Activated naive CD4-positive, alpha-beta T cell treated with anti-CD3 and anti-CD28 coated beads, Interleukin-2, amount 10 ng/mL, durations not matched to agents 7 days and 5 days (primary cell): ENCODE measurements at regions of chr14 and their contacts with region 1.

Region 1: DNA sequence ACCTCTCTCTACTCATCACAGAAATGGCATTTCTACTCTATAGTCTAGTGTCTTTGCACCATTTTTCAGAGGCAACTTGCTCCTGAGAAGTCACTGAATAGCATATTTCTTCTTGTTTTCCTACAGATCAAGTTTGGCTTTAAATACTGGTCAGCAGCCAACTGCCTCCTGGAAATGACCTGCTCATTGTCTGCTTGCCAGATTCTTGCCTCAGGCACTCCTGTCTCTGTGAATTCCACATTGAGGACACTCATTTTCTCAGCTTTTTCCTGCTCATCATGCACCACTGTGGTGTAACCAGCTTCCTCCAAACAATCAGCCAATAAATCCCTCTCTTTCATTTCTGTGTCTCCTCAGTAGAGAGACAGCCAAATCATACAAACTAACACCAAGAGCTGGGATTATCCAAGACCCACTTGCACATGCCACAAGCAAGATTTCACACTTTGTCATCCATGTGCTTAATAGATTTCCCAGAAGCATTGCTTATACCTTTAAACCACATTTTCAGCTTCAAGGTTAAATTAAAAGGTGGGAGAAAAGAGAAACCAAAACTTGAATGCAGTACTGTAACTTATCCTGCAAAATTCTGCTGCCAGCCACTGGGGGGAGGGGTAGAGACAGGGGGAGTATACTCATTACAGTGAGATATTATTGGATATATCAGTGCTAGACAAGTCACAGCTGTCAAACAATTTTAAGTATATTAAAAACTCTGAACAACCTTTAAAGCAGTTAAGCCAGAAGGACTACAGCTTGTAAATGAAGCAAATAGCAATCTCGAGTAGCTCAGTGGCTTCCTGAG is 105.0 kb downstream of the PPP2R5E start:
- DNase-seq: peak; percentile 67
- H3K4me3 Mint-ChIP-seq: peak overlapping the region; percentile 55
- H3K27ac Mint-ChIP-seq: peak overlapping the region; percentile 74
- H3K4me1 Mint-ChIP-seq: peaks cover 43% of the 10 kb centered on the region
- H3K27me3 Mint-ChIP-seq: no peaks in the 10 kb centered on the region

Region 2: DNA sequence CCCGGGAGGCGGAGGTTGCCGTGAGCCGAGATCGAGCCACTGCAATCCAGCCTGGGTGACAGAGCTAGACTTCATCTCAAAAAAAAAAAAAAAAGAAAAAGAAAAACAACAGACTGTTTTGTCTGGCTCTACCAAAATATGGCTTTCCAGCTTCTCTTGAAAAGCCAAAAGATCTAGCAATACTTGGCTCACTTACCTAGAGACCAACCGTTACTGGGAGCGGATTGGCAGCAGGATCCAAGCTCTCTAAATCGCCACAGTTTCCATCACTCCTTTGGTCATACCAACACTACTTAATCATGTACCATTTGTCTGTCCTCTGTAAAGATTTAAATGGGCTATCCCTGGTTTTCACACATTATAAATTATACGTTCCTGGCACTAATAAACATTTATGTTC is 31.8 kb before region 1 on chr14:
- CTCF ChIA-PET with region 1: no interaction called
- DNase-seq: no peak
- H3K4me3 Mint-ChIP-seq: no peak overlapping the region
- H3K27ac Mint-ChIP-seq: no peak overlapping the region
- H3K4me1 Mint-ChIP-seq: peaks cover 4% of the 10 kb centered on the region
- H3K27me3 Mint-ChIP-seq: no peaks in the 10 kb centered on the region

Region 3: GRCh38 chr14:63457498-63457897 is 19.3 kb after region 1 on chr14:
- CTCF ChIA-PET with region 1: no interaction called
- DNase-seq: no peak
- H3K4me3 Mint-ChIP-seq: no peak overlapping the region
- H3K27ac Mint-ChIP-seq: no peak overlapping the region
- H3K4me1 Mint-ChIP-seq: no peaks in the 10 kb centered on the region
- H3K27me3 Mint-ChIP-seq: no peaks in the 10 kb centered on the region

Region 4: DNA sequence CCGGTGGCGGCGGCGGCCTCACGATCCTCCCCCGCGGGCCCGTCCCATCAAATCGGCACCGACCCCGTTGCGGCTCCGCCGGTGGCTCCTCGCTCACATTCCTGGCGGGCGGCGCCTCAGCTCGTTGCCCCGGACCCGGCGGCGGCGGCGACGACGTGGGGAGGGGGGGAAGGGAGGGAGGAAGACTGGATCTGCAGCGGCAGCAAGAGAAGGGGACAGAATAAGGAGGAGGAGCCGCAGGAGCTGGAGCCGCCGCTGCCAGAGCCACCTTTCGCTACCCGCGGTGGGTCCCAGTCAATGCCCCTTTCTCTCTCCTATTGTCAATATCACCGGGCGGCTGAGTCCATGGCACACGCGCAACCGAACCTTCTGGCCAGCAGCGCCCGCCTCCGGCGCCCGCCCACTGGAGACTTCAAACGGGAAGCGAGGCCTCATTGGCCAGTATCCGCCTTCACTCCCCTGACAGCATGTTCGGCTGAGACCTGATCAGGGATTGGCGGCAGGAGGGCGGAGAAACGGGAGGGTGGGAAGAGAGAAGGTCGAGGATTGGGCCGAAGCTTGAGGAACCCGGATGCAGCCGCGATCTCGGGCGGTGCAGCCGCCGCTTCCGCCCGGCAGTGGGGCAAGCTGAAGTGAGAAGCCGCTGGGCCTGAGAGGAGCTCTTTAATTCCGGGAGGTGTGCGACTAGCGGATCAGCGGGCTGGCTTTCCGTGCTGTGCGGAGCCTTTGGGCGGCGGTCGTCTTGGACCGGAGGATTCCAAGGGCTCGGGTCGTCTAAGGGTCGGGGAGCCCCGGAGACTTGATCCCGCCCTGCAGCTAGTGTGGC is 105.1 kb after region 1 on chr14 and contains the start of gene PPP2R5E:
- CTCF ChIA-PET with region 1: interaction called, 11 read pairs
- DNase-seq: peak; percentile 99
- H3K4me3 Mint-ChIP-seq: peak within 1 kb of the TSS; percentile 87
- H3K27ac Mint-ChIP-seq: peak within 1 kb of the TSS; percentile 91
- H3K4me1 Mint-ChIP-seq: peaks cover 30% of the 10 kb centered on the region
- H3K27me3 Mint-ChIP-seq: peaks cover 4% of the 10 kb centered on the region